ENCODE measurements at regions of chr1 and their contacts with region 1.

Region 1: DNA sequence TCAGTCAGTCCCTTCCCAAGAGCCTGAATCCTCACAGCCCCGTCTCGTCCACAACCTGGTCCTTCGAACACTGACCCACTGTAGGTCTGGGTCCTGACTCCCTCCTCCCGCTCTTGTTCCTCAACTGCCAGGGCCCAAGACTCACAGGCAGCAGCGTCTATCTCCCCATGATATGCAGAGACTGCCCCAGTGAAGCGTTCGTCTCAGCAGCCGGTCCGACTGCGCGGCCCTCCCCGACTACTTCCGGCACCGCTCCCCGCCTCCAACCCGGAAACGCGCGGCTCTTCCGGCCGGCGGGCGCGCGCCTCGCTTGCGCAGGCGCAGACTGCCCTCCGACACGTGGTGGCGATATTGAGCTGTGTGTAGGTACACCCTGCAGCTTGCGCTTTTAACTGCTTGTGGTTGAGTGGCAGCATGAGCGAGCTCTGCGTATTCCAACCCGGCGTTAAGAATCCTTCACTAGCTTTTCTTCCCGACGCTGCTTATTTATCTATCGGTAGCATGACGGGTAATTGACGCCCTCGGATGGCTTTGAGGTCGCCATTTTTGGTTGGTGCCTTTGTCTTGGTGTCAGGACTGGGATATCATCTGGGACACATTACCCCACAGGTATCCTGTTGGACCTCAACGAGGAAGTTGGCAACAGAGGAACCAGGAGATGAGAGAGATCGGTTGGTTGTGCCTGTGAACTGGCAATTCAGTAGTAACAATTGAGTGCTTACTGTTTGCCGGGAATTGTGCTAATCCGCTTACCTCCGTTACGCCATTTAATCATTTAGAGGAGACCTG is at the start of gene TAF12:
- DNase-seq: peak; percentile 85 to 89
- H3K4me3 ChIP-seq: peak within 1 kb of the TSS; percentile 58
- H3K4me3 Mint-ChIP-seq: peak within 1 kb of the TSS; percentile 100
- H3K27ac Mint-ChIP-seq: peak within 1 kb of the TSS; percentile 98
- H3K4me1 ChIP-seq: 0 out of 2 replicates have a peak, but pooled peaks cover 6% of the 10 kb centered on the region
- H3K4me1 Mint-ChIP-seq: peaks cover 21% of the 10 kb centered on the region
- H3K27me3 ChIP-seq: no peaks in the 10 kb centered on the region
- H3K27me3 Mint-ChIP-seq: no peaks in the 10 kb centered on the region
- CTCF ChIP-seq: peak in 1 of 2 experiments; percentile 17
- total RNA-seq, gene TAF12: 9.7 and 11.3 TPM in 2 replicates

Region 2: GRCh38 chr1:28581536-28582247 is 61.3 kb before region 1 on chr1:
- CTCF ChIA-PET with region 1: interaction called, 8 read pairs
- POLR2A ChIA-PET with region 1: interaction called, 30 read pairs
- intact Hi-C with region 1: no loop called
- DNase-seq: peak; percentile 91 to 92
- H3K4me3 ChIP-seq: peak overlapping the region; percentile 73
- H3K4me3 Mint-ChIP-seq: peak overlapping the region; percentile 85
- H3K27ac Mint-ChIP-seq: peak overlapping the region; percentile 88
- H3K4me1 ChIP-seq: peaks cover 5% of the 10 kb centered on the region; the same call in 1 of the 2 replicates
- H3K4me1 Mint-ChIP-seq: peaks cover 11% of the 10 kb centered on the region
- H3K27me3 ChIP-seq: no peaks in the 10 kb centered on the region
- H3K27me3 Mint-ChIP-seq: no peaks in the 10 kb centered on the region
- CTCF ChIP-seq: no peak

Region 3: DNA sequence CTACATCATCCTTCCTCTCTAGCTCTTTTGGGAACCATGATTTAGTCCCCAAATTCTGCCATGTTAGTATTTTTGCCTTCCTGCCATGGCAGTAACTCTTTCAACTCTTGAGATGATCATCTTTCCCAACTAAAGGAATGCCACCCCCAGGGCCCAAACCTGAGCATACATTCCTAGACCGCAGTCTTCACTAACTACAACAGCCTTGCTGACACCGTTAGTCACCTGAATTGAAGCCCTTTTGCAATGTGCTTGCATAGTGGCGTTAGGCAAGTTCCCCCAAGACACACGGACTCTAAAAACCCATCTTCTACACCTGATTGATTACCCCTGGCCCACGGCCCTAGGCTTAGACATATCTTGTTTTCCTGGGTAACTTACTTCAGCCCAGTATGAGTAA is 77.3 kb after region 1 on chr1:
- CTCF ChIA-PET with region 1: interaction called, 10 read pairs
- POLR2A ChIA-PET with region 1: interaction called, 9 read pairs
- intact Hi-C with region 1: no loop called
- DNase-seq: no peak
- H3K4me3 ChIP-seq: no peak overlapping the region
- H3K4me3 Mint-ChIP-seq: no peak overlapping the region
- H3K27ac Mint-ChIP-seq: peak overlapping the region; percentile 70
- H3K4me1 ChIP-seq: no peaks in the 10 kb centered on the region
- H3K4me1 Mint-ChIP-seq: no peaks in the 10 kb centered on the region
- H3K27me3 ChIP-seq: no peaks in the 10 kb centered on the region
- H3K27me3 Mint-ChIP-seq: no peaks in the 10 kb centered on the region
- CTCF ChIP-seq: no peak

Region 4: DNA sequence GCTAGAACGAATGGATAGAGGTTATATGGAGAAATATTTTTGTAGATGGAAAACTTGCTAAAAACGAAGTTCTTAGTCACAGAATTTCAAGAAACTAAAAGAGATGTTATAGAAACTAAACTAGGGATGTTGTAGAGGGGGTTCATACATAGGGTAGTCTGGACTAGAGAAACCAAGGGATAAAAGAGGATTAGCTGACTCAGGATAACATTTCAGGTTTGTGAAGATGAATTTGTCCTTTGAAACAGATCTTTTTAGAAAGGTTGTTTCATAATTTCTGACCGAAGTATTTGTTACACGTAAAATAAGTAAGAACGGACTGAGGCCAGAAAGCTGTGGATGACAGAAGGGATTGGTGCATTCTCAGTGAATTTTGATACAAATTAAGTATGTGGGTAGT is 107.3 kb after region 1 on chr1:
- CTCF ChIA-PET with region 1: interaction called, 3 read pairs
- POLR2A ChIA-PET with region 1: interaction called, 15 read pairs
- intact Hi-C with region 1: loop called (anchors 5 kb)
- DNase-seq: no peak
- H3K4me3 ChIP-seq: no peak overlapping the region
- H3K4me3 Mint-ChIP-seq: no peak overlapping the region
- H3K27ac Mint-ChIP-seq: peak overlapping the region; percentile 50
- H3K4me1 ChIP-seq: peaks cover 23% of the 10 kb centered on the region
- H3K4me1 Mint-ChIP-seq: peaks cover 28% of the 10 kb centered on the region
- H3K27me3 ChIP-seq: no peaks in the 10 kb centered on the region
- H3K27me3 Mint-ChIP-seq: no peaks in the 10 kb centered on the region
- CTCF ChIP-seq: no peak

Region 5: DNA sequence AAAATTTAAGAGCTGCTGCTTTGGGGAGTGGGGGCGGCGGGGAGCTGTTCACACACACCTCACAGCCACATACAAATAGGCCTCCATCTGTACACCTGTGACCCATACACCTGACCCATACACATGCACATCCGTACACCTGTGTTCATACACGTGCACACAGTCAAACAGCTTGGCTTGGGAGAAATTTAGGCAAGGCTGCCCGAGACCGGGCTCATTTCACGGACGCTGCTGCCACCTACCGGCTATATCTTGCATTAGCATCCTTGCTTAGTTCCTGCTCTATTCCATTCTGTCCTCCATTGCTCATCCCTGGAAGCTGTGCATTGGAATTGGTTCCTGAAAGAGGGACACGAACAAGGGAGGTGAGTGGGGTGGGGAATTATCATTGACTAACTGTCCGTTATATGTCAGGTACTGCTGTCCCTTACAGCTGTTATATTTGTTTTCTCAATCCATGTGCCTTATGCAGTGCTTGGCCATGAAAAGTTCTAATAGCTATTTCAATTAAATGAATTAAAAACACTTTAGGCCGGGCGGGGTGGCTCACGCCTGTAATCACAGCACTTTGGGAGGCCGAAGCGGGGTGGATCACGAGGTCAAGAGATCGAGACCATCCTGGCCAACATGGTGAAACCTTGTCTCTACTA is 234.2 kb after region 1 on chr1:
- CTCF ChIA-PET with region 1: interaction called, 8 read pairs
- POLR2A ChIA-PET with region 1: interaction called, 17 read pairs
- intact Hi-C with region 1: loop called (anchors 2 kb)
- DNase-seq: peak; percentile 63 to 80
- H3K4me3 ChIP-seq: no peak overlapping the region
- H3K4me3 Mint-ChIP-seq: no peak overlapping the region
- H3K27ac Mint-ChIP-seq: no peak overlapping the region
- H3K4me1 ChIP-seq: peaks cover 6% of the 10 kb centered on the region
- H3K4me1 Mint-ChIP-seq: peaks cover 11% of the 10 kb centered on the region
- H3K27me3 ChIP-seq: no peaks in the 10 kb centered on the region
- H3K27me3 Mint-ChIP-seq: no peaks in the 10 kb centered on the region
- CTCF ChIP-seq: peak; percentile 52 to 73